PC-3 (cell line): ENCODE measurements at regions of chr3 and their contacts with region 1.

Region 1: DNA sequence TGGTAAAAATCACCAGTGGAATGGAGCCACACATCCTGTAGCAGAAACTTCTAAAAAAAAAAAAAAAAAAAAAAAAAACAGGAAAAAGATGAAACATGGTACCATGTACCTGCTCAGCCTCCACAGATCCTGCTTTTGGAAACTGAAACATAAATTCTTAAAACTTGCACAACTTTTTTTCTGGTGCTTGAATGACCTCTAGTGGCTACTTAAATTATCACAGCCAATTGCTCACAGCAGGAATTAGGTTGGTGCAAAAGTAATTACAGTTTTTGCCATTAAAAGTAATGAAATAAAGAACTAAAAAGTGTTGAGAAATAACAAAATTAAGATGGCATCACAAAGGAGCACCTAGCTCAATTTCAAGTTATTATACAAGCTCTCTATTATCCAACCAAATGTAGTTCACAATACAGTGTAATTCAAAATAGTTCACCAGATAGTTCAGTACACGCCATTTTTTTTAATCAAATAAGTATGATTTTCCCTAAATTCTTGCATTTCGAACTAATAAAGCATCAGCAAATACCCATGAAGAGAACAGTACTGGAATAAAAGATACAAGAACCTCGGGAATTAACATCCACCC is 80.6 kb downstream of the ULK4 start:
- DNase-seq: peak; percentile 73
- ATAC-seq: no peak; the same call in 1 of the 2 replicates
- H3K4me3 ChIP-seq: no peak overlapping the region
- H3K27ac ChIP-seq: no peak overlapping the region
- H3K4me1 ChIP-seq: no peaks in the 10 kb centered on the region
- H3K27me3 ChIP-seq: no peaks in the 10 kb centered on the region
- CTCF ChIP-seq: peak; percentile 76

Region 2: GRCh38 chr3:40580494-40581091 is 1300.7 kb before region 1 on chr3:
- CTCF ChIA-PET with region 1: no interaction called
- POLR2A ChIA-PET with region 1: interaction called, 6 read pairs
- intact Hi-C with region 1: loop called (anchors 1 kb)
- DNase-seq: peak; percentile 87
- ATAC-seq: peak; percentile 77
- H3K4me3 ChIP-seq: no peak overlapping the region
- H3K27ac ChIP-seq: no peak overlapping the region
- H3K4me1 ChIP-seq: no peaks in the 10 kb centered on the region
- H3K27me3 ChIP-seq: peaks cover 37% of the 10 kb centered on the region
- CTCF ChIP-seq: peak; percentile 98

Region 3: GRCh38 chr3:41199866-41200668 is 681.3 kb before region 1 on chr3:
- CTCF ChIA-PET with region 1: no interaction called
- POLR2A ChIA-PET with region 1: no interaction called
- intact Hi-C with region 1: loop called (anchors 5 kb)
- DNase-seq: peak; percentile 46
- ATAC-seq: peak; percentile 14
- H3K4me3 ChIP-seq: peak overlapping the region; percentile 90
- H3K27ac ChIP-seq: peak overlapping the region; percentile 60; the same call in 1 of the 2 replicates
- H3K4me1 ChIP-seq: peaks cover 27% of the 10 kb centered on the region
- H3K27me3 ChIP-seq: no peaks in the 10 kb centered on the region
- CTCF ChIP-seq: no peak

Region 4: GRCh38 chr3:41697702-41698101 is 183.6 kb before region 1 on chr3:
- CTCF ChIA-PET with region 1: no interaction called
- POLR2A ChIA-PET with region 1: no interaction called
- intact Hi-C with region 1: loop called (anchors 2 kb)
- DNase-seq: no peak
- ATAC-seq: peak; percentile 40; the same call in 1 of the 2 replicates
- H3K4me3 ChIP-seq: no peak overlapping the region
- H3K27ac ChIP-seq: no peak overlapping the region
- H3K4me1 ChIP-seq: no peaks in the 10 kb centered on the region
- H3K27me3 ChIP-seq: no peaks in the 10 kb centered on the region
- CTCF ChIP-seq: no peak